Activated CD4-positive, alpha-beta T cell treated with anti-CD3 and anti-CD28 coated beads for 36 hours (primary cell): ENCODE measurements at regions of chr11 and their contacts with region 1.

Region 1: GRCh38 chr11:48109046-48109666 is 107.5 kb upstream of the OR4B1 start:
- DNase-seq: no peak
- ATAC-seq: peak; percentile 34
- H3K4me3 Mint-ChIP-seq: peak overlapping the region; percentile 66
- H3K27ac Mint-ChIP-seq: peak overlapping the region; percentile 87
- H3K4me1 Mint-ChIP-seq: peaks cover 49% of the 10 kb centered on the region
- H3K27me3 Mint-ChIP-seq: no peaks in the 10 kb centered on the region

Region 2: DNA sequence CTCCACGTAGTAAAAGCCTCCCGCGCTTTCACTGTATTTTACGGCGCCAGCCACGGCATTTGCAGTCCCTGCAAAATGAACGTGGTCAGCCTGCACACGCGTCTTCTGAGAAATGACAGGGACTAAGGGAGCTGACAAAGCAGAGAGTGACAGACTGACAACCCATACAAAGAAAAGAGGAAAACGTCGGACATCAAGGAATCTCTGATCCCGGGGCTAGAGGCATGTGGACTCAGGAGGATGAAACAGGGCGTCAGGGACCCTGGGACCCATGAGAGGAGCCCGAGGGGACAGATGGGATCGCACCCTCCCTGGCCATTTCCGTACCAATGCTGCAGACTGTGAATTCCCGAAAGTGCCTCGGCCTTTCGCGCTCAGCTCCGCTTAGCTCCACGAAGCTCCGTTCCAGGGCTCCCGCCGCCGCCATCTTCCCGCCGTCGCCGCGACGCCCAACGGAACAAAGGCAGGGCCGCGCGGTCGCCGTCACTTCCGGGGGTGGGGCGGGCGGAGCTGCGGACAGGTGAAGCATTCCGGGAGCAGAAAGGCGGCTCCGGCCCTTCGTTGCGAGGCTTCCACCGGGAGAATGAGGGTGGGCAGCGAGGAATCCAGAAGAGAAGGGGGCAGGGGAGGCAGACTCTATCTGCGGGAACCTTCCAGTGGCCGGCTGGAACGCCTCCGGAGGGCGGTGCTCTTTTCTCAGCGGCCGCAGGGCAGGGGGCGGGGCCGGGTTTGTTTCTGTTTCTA is 261.1 kb before region 1 on chr11 and contains the start of gene NUP160:
- CTCF ChIA-PET with region 1: interaction called, 7 read pairs
- POLR2A ChIA-PET with region 1: no interaction called
- intact Hi-C with region 1: loop called (anchors 1 to 2 kb)
- DNase-seq: peak; percentile 94
- ATAC-seq: peak; percentile 88
- H3K4me3 Mint-ChIP-seq: peak within 1 kb of the TSS; percentile 90
- H3K27ac Mint-ChIP-seq: peak within 1 kb of the TSS; percentile 99
- H3K4me1 Mint-ChIP-seq: peaks cover 44% of the 10 kb centered on the region
- H3K27me3 Mint-ChIP-seq: no peaks in the 10 kb centered on the region
- total RNA-seq, gene NUP160: 67.1 to 84.5 TPM

Region 3: GRCh38 chr11:47932544-47932943 is 176.6 kb before region 1 on chr11:
- CTCF ChIA-PET with region 1: interaction called, 209 read pairs
- POLR2A ChIA-PET with region 1: interaction called, 6 read pairs
- intact Hi-C with region 1: loop called (anchors 1 kb)
- DNase-seq: no peak
- ATAC-seq: peak; percentile 84
- H3K4me3 Mint-ChIP-seq: no peak overlapping the region
- H3K27ac Mint-ChIP-seq: no peak overlapping the region
- H3K4me1 Mint-ChIP-seq: peaks cover 21% of the 10 kb centered on the region
- H3K27me3 Mint-ChIP-seq: no peaks in the 10 kb centered on the region

Region 4: DNA sequence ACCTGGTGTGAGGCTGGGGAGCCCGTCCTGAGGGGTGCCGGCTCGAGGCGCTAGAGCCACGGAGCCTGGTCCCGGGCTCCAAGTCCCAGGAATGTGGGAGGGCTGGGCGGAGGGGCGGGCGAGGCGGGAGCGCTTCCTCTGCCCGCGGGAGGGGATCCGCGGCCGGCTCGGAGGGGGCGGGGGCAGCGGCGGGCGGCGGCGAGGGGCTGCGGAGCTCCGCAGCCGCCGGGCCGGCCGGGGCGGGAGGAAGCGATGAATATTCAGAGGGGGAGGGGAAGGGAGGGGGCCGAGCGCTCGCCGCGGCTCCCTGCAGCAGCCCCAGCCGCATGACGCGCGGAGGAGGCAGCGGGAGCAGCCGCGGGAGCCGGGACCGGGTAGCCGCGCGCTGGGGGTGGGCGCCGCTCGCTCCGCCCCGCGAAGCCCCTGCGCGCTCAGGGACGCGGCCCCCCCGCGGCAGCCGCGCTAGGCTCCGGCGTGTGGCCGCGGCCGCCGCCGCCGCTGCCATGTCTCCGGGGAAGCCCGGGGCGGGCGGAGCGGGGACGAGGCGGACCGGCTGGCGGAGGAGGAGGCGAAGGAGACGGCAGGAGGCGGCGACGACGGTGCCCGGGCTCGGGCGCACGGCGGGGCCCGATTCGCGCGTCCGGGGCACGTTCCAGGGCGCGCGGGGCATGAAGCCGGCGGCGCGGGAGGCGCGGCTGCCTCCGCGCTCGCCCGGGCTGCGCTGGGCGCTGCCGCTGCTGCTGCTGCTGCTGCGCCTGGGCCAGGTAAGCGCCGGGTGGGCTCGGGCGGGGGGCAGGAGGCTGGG is 128.7 kb before region 1 on chr11 and contains the start of gene PTPRJ:
- CTCF ChIA-PET with region 1: interaction called, 4 read pairs
- POLR2A ChIA-PET with region 1: interaction called, 3 read pairs
- intact Hi-C with region 1: loop called (anchors 1 kb)
- DNase-seq: peak; percentile 73
- ATAC-seq: peak; percentile 59
- H3K4me3 Mint-ChIP-seq: peak within 1 kb of the TSS; percentile 93
- H3K27ac Mint-ChIP-seq: peak within 1 kb of the TSS; percentile 20
- H3K4me1 Mint-ChIP-seq: peaks cover 30% of the 10 kb centered on the region
- H3K27me3 Mint-ChIP-seq: peaks cover 5% of the 10 kb centered on the region
- total RNA-seq, gene PTPRJ: 20.8 to 21.3 TPM

Region 5: DNA sequence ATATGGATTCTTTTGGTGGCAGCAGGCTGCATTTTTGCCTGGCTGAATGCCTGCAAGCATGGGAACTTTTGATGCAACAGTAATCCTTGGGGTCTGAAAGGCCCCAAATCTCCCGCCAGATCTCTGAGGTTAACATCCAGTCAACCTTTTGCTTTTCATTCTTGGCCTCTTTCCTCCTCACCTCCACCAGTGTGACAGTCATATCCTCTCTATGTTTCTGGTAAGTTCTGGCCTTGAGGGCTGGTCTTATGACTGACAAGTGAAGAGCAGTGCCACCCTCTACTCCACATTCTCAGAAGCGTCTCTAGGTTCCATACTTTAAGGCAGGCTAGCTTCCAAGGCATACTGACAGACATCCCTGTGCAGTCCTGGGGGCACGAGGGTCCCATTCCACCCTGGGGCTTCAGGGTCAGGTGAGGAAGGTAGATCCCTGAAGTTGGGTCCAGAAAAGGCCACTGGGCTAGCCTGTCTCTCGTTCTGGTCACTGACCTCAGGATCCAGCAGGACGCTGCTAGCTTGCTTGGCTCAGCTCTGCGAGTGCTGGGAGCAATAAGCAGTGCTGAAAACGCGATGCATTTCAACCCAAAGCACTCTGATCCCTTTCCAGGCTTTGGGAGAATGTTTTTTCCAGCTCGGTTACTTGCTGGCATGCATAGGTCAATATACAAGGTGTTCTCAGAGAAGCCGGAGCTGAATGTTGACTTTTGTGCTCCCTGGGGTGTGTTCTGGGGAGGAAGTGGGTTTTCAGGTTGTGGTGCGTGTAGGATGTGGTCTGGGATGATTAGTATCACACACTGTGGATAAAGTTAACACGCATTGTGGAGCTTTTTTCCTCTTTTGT is 53.6 kb before region 1 on chr11:
- CTCF ChIA-PET with region 1: interaction called, 6 read pairs
- POLR2A ChIA-PET with region 1: interaction called, 7 read pairs
- intact Hi-C with region 1: loop called (anchors 1 kb)
- DNase-seq: peak; percentile 80
- ATAC-seq: peak; percentile 93
- H3K4me3 Mint-ChIP-seq: peak overlapping the region; percentile 55
- H3K27ac Mint-ChIP-seq: peak overlapping the region; percentile 89
- H3K4me1 Mint-ChIP-seq: peaks cover 84% of the 10 kb centered on the region
- H3K27me3 Mint-ChIP-seq: no peaks in the 10 kb centered on the region